Common myeloid progenitor, CD34-positive (primary cell): ENCODE measurements at regions of chr4 and their contacts with region 1.

Region 1: DNA sequence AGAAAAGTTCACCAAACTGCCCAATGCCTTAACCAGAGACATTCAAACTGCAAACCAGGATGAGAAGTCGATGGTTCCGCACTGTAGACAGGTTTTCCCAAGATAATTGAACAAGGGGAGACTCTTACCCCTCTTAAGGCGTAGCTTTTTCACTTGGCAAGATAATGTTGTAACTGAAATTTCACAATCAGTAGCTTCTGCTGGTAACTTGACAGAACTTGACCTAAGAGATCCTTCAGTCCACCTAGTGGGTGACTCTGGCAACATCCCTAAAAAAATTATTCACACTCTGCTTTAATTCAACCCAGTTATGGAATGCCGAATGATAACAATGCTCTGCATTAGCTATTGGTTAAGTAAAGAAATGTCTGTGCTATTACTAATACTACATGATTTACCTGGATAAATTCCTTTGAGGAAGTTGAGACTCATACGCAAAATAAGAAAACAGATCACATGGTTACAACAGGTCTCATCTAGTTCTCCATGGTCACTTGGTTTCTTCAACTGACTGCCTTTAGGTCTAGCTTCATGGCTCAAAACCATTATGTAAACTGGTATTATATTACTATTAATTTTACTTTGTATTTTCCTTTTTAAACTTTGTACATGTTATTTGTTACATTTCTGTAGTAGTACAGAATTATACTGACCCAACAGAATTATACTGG is 9.1 kb downstream of the ELF2 start:
- DNase-seq: peak; percentile 57 to 73 (median 71)
- H3K4me3 ChIP-seq: no peak overlapping the region
- H3K27ac ChIP-seq: peak overlapping the region in 1 of 2 experiments; percentile 53
- H3K4me1 ChIP-seq: peaks cover 0 to 32% (median 18%) of the 10 kb centered on the region in 4 experiments
- H3K27me3 ChIP-seq: no peaks in the 10 kb centered on the region

Region 2: GRCh38 chr4:139123910-139124309 is 44.0 kb before region 1 on chr4:
- CTCF ChIA-PET with region 1: interaction called, 10 read pairs
- POLR2A ChIA-PET with region 1: interaction called, 3 read pairs
- DNase-seq: no peak
- H3K4me3 ChIP-seq: no peak overlapping the region
- H3K27ac ChIP-seq: no peak overlapping the region
- H3K4me1 ChIP-seq: no peaks in the 10 kb centered on the region
- H3K27me3 ChIP-seq: no peaks in the 10 kb centered on the region

Region 3: GRCh38 chr4:139153420-139154133 is 14.3 kb before region 1 on chr4:
- CTCF ChIA-PET with region 1: interaction called, 32 read pairs
- POLR2A ChIA-PET with region 1: no interaction called
- DNase-seq: no peak
- H3K4me3 ChIP-seq: no peak overlapping the region
- H3K27ac ChIP-seq: no peak overlapping the region
- H3K4me1 ChIP-seq: peaks cover 0 to 2% (median 0%) of the 10 kb centered on the region in 4 experiments
- H3K27me3 ChIP-seq: no peaks in the 10 kb centered on the region

Region 4: DNA sequence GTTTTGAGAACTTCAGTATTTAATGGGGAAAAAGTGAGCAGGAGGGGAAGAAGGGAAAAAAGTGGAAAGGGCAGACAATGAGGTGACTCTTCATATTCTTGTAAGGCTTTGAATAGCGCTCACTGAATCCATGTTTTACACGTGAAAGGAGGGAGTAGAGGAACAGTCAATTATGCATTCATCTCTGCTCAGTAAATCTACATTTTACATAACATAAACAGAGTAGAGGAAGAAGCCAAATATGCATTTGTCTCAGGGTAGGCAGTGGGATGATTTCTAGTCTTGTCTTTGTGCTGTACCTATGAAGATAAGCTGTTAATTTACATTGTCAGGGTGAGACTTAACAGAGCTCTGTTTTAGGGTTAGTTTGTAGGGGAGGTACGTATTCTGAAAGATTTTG is 28.6 kb after region 1 on chr4:
- CTCF ChIA-PET with region 1: no interaction called
- POLR2A ChIA-PET with region 1: no interaction called
- DNase-seq: no peak
- H3K4me3 ChIP-seq: no peak overlapping the region
- H3K27ac ChIP-seq: no peak overlapping the region
- H3K4me1 ChIP-seq: no peaks in the 10 kb centered on the region
- H3K27me3 ChIP-seq: no peaks in the 10 kb centered on the region